Breast epithelium (tissue), 4 donors: ENCODE measurements at regions of chr3 and their contacts with region 1.

Region 1: DNA sequence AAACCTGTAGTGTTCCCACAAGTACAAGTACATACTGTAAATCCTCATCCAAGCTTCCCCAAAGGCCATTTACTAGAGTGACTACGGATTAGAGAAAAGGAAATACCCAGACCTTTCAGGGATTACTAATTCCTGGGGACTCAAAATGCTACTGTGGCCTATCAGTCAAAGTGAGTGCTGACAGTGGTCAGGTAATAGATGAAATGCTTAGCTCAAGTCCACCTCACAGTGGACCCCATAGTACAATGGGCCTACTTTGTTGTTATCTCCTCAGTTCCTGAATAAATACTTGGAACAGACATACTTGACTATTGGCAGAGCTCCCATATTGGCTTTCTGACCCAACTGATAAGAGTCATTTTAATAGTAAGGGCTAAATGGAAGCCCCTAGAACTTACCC is 61.6 kb downstream of the MAP4 start:
- DNase-seq: no peak
- H3K4me3 ChIP-seq: no peak overlapping the region
- H3K27ac ChIP-seq: no peak overlapping the region
- H3K4me1 ChIP-seq: no peaks in the 10 kb centered on the region
- H3K27me3 ChIP-seq: no peaks in the 10 kb centered on the region
- CTCF ChIP-seq: no peak
- POLR2A ChIP-seq: no peak

Region 2: DNA sequence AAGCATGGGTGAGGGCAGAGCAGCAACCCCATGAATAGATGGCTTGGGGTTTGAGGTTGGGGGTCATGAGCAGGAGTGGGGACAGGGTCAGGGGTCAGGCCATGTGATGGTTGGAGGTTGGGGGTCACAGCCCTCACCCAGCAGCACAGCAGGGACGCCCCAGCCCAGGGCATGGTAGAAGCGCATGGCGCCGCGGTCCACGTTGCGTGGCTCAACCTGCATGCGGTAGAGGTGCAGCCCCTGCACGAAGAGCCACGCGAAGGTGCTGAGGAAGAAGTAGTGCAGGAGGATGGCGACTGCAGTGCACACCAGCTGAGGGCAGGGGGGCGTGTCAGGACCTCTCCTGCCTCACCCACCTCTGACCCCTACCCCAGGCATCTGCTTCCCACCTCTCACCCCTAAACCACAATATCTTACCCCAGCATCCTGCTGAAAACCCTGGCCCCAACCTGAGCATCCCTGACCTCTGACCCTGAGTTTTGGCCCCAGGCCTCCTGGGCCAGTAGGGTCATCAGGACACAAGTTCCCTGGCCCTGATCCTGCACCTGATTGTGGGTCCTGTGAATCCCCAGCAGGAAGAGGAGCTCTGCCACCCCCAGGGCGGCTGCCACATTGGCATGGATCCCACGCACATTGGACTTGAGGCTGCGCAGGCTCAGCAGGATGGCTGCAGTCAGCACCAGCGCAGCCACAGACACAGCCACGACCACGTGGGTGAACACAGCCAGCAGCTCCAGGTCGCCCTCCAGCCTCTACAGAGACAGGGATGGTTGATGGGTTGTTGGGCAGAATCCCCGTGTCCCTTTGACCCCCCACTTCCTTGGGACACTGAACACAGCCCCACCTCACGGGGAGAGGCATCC is 690.6 kb after region 1 on chr3:
- intact Hi-C with region 1: loop called (anchors 5 kb)
- DNase-seq: no peak
- H3K4me3 ChIP-seq: no peak overlapping the region
- H3K27ac ChIP-seq: no peak overlapping the region
- H3K4me1 ChIP-seq: no peaks in the 10 kb centered on the region
- H3K27me3 ChIP-seq: no peaks in the 10 kb centered on the region
- CTCF ChIP-seq: no peak
- POLR2A ChIP-seq: no peak